ENCODE measurements at regions of chr22 and their contacts with region 1.

Region 1: GRCh38 chr22:40651563-40652501 is 15.3 kb upstream of the MRTFA start:
- DNase-seq: peak; percentile 91
- H3K4me3 Mint-ChIP-seq: peak overlapping the region; percentile 55
- H3K27ac Mint-ChIP-seq: peak overlapping the region; percentile 85
- H3K4me1 Mint-ChIP-seq: peaks cover 22% of the 10 kb centered on the region
- H3K27me3 Mint-ChIP-seq: no peaks in the 10 kb centered on the region

Region 2: GRCh38 chr22:40567106-40567505 is 84.7 kb before region 1 on chr22:
- intact Hi-C with region 1: no loop called
- DNase-seq: no peak
- H3K4me3 Mint-ChIP-seq: no peak overlapping the region
- H3K27ac Mint-ChIP-seq: no peak overlapping the region
- H3K4me1 Mint-ChIP-seq: peaks cover 2% of the 10 kb centered on the region
- H3K27me3 Mint-ChIP-seq: no peaks in the 10 kb centered on the region

Region 3: DNA sequence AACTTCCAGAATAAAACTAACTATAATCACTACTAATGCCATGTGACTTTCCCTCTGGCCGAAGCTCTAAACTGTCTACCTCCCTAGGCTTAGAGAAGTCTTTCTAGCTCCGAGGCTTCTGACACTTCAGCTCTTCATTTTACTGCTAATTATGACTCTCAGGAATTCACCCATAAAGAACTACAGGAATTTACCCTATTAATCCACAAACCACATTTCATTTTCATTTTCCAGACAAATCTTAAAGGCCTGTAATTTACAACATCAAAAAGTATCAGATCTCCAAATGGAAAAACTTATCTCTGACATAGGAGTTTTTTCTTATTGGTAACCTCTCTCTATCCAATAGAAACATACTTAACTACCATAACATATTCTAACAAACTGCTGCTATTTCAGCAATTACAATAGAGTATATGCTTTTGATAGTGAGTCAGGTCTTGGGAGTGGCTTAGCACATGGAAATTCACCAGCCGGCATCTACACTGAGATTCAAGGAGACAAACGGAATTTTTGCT is 48.7 kb before region 1 on chr22:
- intact Hi-C with region 1: no loop called
- DNase-seq: no peak
- H3K4me3 Mint-ChIP-seq: no peak overlapping the region
- H3K27ac Mint-ChIP-seq: no peak overlapping the region
- H3K4me1 Mint-ChIP-seq: peaks cover 20% of the 10 kb centered on the region
- H3K27me3 Mint-ChIP-seq: no peaks in the 10 kb centered on the region

Region 4: DNA sequence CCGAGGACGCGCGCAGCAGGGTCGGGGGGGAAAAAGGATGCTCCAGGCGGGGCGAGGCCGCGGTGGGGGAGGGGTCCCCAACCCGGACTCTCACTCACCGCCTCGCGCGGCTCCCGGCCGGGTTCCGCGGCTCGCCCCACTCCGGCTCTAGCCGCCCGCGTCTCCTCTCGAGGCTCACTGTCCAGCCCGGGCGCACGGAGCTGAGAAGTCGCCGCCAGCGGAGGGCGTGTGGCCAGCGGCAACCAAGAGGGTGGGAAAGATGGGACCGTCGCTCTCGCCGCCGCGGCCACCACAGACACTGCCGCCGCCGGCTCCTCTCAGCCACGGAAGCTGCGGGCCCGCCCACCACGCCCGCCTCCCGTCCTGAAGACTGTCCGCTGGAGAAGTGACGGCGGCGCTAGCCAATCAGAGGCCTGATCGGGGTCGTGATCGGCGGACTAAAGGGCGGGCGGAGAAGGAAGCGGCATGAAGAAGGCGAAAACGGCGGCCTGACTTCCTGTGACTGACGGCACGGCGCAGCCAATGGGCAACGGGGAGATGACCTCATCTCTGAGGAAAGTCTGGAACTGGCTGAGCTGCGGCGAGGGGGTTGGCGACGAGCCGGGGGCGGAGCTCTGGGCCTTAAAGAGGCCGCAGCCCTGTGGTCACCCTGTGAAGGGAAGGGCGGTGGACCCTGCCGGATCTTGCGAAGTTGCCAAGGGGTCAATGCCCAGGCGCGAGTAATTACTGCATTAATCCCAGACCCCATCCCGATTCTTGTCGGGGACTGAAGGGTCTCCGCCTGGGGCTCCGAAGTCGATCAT is 15.3 kb before region 1 on chr22 and contains the start of gene MRTFA:
- intact Hi-C with region 1: no loop called
- DNase-seq: peak; percentile 100
- H3K4me3 Mint-ChIP-seq: peak within 1 kb of the TSS; percentile 91
- H3K27ac Mint-ChIP-seq: peak within 1 kb of the TSS; percentile 95
- H3K4me1 Mint-ChIP-seq: peaks cover 32% of the 10 kb centered on the region
- H3K27me3 Mint-ChIP-seq: no peaks in the 10 kb centered on the region
- total RNA-seq, gene MRTFA: 51.7 and 51.9 TPM in 2 replicates

Region 5: GRCh38 chr22:40668611-40669411 is 17.0 kb after region 1 on chr22:
- intact Hi-C with region 1: loop called (anchors 2 kb)
- DNase-seq: peak; percentile 72
- H3K4me3 Mint-ChIP-seq: peak overlapping the region; percentile 63
- H3K27ac Mint-ChIP-seq: peak overlapping the region; percentile 91
- H3K4me1 Mint-ChIP-seq: peaks cover 26% of the 10 kb centered on the region
- H3K27me3 Mint-ChIP-seq: no peaks in the 10 kb centered on the region

Region 6: GRCh38 chr22:40862537-40862936 is 210.7 kb after region 1 on chr22:
- intact Hi-C with region 1: no loop called
- DNase-seq: no peak
- H3K4me3 Mint-ChIP-seq: no peak overlapping the region
- H3K27ac Mint-ChIP-seq: no peak overlapping the region
- H3K4me1 Mint-ChIP-seq: peaks cover 11% of the 10 kb centered on the region
- H3K27me3 Mint-ChIP-seq: no peaks in the 10 kb centered on the region

Measured in activated CD4-positive, alpha-beta T cell treated with anti-CD3 and anti-CD28 coated beads, Interleukin-2, amount 10 ng/mL, durations not matched to agents 24 days and 14 days (primary cell).